ENCODE measurements at regions of chr1 and their contacts with region 1.

Region 1: GRCh38 chr1:155084722-155085503 is 6.3 kb downstream of the EFNA3 start:
- DNase-seq: peak; percentile 93 to 96
- H3K4me3 ChIP-seq: peak overlapping the region; percentile 64
- H3K4me3 Mint-ChIP-seq: peak overlapping the region; percentile 94
- H3K27ac Mint-ChIP-seq: peak overlapping the region; percentile 83
- H3K4me1 ChIP-seq: peaks cover 28% of the 10 kb centered on the region
- H3K4me1 Mint-ChIP-seq: peaks cover 8% of the 10 kb centered on the region
- H3K27me3 ChIP-seq: 0 out of 2 replicates have a peak, but pooled peaks cover 2% of the 10 kb centered on the region
- H3K27me3 Mint-ChIP-seq: peaks cover 11% of the 10 kb centered on the region
- CTCF ChIP-seq: peak; percentile 86 to 91

Region 2: GRCh38 chr1:154669464-154670282 is 415.2 kb before region 1 on chr1:
- CTCF ChIA-PET with region 1: no interaction called
- POLR2A ChIA-PET with region 1: no interaction called
- intact Hi-C with region 1: loop called (anchors 10 kb)
- DNase-seq: peak; percentile 74 to 75
- H3K4me3 ChIP-seq: no peak overlapping the region
- H3K4me3 Mint-ChIP-seq: no peak overlapping the region
- H3K27ac Mint-ChIP-seq: no peak overlapping the region
- H3K4me1 ChIP-seq: no peaks in the 10 kb centered on the region
- H3K4me1 Mint-ChIP-seq: no peaks in the 10 kb centered on the region
- H3K27me3 ChIP-seq: no peaks in the 10 kb centered on the region
- H3K27me3 Mint-ChIP-seq: peaks cover 3% of the 10 kb centered on the region
- CTCF ChIP-seq: peak; percentile 77 to 87

Region 3: GRCh38 chr1:155017041-155017945 is 67.6 kb before region 1 on chr1:
- CTCF ChIA-PET with region 1: interaction called, 10 read pairs
- POLR2A ChIA-PET with region 1: no interaction called
- intact Hi-C with region 1: no loop called
- DNase-seq: peak; percentile 97 to 98
- H3K4me3 ChIP-seq: peak overlapping the region; percentile 6; the same call in 1 of the 2 replicates
- H3K4me3 Mint-ChIP-seq: peak overlapping the region; percentile 56
- H3K27ac Mint-ChIP-seq: peak overlapping the region; percentile 76
- H3K4me1 ChIP-seq: peaks cover 20% of the 10 kb centered on the region
- H3K4me1 Mint-ChIP-seq: peaks cover 38% of the 10 kb centered on the region
- H3K27me3 ChIP-seq: no peaks in the 10 kb centered on the region
- H3K27me3 Mint-ChIP-seq: no peaks in the 10 kb centered on the region
- CTCF ChIP-seq: peak; percentile 99 to 100

Region 4: DNA sequence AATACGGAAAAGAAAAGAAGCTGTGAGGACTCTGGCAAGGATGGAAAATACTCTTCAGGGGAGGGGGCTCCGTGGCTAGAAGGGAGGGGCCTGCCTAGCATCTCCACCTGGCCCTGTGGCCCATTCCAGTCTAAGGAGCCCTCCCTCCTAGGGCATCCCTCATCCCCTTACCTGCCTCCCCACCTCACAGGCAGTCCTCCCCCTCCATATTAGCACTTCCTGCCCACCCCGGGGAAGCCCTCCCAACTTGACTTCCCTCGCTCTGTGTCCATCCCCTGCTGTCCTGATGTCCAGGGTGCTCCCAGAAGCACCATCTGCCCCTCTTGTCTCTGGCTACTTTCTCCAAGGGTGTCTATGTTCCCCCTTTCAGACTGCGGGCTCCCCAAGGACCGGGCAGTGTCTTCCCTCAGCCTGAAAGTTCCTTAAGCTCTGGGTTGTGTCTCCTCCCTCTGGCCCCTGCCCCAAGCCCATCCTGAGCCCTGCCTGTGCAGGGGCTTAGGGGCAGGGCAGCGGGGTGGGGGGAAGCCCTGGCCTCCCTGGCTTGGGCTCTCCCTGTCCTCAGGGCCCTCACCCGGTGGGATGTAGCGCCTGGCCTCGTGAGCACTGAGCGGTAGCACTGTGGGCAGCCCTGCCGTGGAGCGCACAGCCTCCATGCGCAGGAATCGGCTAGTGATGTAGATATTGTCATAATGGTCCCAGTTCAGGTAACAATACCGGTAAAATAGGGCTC is 55.2 kb before region 1 on chr1:
- CTCF ChIA-PET with region 1: no interaction called
- POLR2A ChIA-PET with region 1: no interaction called
- intact Hi-C with region 1: no loop called
- DNase-seq: no peak
- H3K4me3 ChIP-seq: no peak overlapping the region
- H3K4me3 Mint-ChIP-seq: no peak overlapping the region
- H3K27ac Mint-ChIP-seq: no peak overlapping the region
- H3K4me1 ChIP-seq: peaks cover 5% of the 10 kb centered on the region; the same call in 1 of the 2 replicates
- H3K4me1 Mint-ChIP-seq: no peaks in the 10 kb centered on the region
- H3K27me3 ChIP-seq: no peaks in the 10 kb centered on the region
- H3K27me3 Mint-ChIP-seq: peaks cover under 1% of the 10 kb centered on the region
- CTCF ChIP-seq: no peak

Region 5: DNA sequence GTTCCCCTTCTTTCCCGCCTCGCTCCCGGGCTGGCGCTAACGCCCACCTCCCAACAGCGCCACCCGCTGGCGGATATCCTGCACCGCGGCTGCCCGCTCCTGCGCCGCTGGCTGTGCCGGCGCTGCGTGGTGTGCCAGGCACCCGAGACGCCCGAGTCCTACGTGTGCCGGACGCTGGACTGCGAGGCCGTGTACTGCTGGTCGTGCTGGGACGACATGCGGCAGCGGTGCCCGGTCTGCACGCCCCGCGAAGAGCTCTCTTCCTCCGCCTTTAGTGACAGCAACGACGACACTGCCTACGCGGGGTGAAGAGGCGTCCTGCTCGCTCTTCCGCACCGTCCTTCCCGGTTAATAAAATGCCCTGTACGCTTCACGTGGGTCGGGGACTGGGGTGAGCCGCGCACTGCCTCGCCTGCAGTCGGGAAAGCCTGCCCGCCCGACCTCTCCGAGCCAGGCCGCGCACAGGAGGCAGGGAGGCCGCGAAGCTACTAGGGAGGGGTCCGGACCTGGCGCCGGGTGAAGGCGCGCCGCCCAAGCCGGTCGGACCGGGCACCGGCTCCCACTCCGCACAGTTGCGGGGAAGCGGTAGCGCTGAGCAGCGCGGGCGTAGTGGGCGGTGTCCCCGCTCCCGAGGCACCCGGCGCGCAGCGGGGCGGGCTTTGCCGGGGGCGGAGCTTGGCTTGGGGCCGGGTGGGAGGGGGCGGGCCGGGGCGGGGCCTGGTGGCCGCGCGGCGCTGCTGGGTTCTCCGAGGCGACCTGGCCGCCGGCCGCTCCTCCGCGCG is 34.2 kb before region 1 on chr1 and contains the start of gene ADAM15:
- CTCF ChIA-PET with region 1: interaction called, 20 read pairs
- POLR2A ChIA-PET with region 1: interaction called, 9 read pairs
- intact Hi-C with region 1: loop called (anchors 1 kb)
- DNase-seq: peak; percentile 80 to 90
- H3K4me3 ChIP-seq: peak within 1 kb of the TSS; percentile 61
- H3K4me3 Mint-ChIP-seq: peak within 1 kb of the TSS; percentile 88
- H3K27ac Mint-ChIP-seq: peak within 1 kb of the TSS; percentile 86
- H3K4me1 ChIP-seq: peaks cover 20% of the 10 kb centered on the region
- H3K4me1 Mint-ChIP-seq: peaks cover 19% of the 10 kb centered on the region
- H3K27me3 ChIP-seq: no peaks in the 10 kb centered on the region
- H3K27me3 Mint-ChIP-seq: no peaks in the 10 kb centered on the region
- CTCF ChIP-seq: peak; percentile 86 to 90
- total RNA-seq, gene ADAM15: 44.0 and 48.2 TPM in 2 replicates

Region 6: DNA sequence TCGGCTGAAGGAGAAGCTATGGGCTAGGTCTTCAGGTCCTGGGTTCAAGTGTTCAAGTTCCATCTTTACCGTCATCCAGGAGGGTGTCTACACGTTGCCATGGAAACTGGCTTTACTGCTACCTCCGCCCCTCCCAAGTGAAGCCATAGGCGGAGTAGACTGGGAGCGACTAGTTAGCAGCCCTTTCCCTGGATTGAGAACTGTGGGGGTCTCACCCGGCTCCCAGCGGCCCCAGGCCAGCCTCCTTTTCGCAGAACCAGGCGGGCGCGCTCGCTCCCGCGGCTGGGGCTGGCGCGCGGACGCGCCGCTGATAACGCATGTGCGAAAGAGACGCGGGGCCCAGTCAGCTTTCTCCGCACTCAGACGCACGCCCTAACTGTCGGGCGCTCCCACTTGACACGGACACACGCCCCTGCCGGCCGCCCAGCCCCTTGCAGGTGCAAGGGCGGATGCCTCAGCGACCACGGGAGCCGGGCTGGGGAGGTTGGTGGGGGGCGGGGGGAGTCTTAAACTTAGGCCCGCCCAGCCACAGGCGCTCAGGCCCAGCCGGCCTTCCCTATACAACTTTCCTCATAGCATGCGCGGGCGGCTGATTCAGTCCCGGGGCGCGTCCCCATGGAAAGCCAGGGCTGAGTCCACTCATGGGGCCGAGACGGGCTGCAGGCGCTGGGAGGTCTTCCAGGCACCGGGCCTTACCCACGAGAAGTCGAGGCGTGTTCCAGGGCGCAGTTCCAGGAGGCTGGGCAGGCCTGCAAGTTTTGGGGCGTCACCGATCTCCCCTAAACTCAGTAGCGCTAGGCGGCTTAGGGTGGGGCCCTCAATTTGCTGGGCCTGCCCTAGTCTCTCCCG is 14.0 kb before region 1 on chr1:
- CTCF ChIA-PET with region 1: interaction called, 39 read pairs
- POLR2A ChIA-PET with region 1: no interaction called
- intact Hi-C with region 1: loop called (anchors 1 kb)
- DNase-seq: peak; percentile 89 to 91
- H3K4me3 ChIP-seq: peak overlapping the region; percentile 30
- H3K4me3 Mint-ChIP-seq: peak overlapping the region; percentile 20
- H3K27ac Mint-ChIP-seq: no peak overlapping the region
- H3K4me1 ChIP-seq: peaks cover 20% of the 10 kb centered on the region
- H3K4me1 Mint-ChIP-seq: peaks cover 5% of the 10 kb centered on the region
- H3K27me3 ChIP-seq: no peaks in the 10 kb centered on the region
- H3K27me3 Mint-ChIP-seq: no peaks in the 10 kb centered on the region
- CTCF ChIP-seq: peak; percentile 63 to 75

Region 7: DNA sequence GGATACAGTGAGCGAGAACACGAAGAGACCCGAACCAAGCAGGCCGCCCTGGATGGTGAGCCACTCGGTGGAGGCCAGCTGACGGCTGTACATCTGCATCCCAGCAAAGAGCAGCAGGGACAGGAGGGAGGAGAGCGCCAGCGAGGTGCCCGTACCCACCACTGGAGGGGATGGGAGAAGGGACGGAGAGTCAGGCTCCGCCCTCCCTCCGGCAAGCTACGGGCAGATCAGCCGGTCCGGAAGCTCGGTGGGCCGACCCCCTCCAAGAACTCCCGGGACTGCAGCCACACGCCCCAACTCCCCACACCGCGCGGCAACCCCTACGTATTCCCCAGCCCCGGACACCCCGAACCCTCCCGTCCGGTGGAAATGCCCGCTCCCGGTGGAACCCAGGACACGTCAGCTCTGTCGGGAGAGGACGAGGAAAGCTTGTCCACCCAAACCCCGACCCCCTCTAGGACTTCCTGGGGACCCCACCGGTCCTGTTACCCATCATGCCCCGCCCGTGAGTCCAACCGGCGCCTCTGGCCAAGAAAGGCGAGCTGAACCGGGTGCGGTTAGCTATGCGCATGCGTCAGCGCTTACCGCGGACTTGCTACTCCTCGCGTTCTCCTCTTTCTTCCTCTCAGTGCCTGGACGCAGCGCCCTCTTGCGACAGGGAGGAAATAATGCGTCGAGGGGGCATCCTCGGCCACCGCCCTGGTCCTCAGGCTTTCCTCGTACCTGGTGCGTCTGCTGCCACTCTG is 88.0 kb after region 1 on chr1 and contains the start of gene KRTCAP2:
- CTCF ChIA-PET with region 1: interaction called, 147 read pairs
- POLR2A ChIA-PET with region 1: interaction called, 7 read pairs
- intact Hi-C with region 1: no loop called
- DNase-seq: peak; percentile 94 to 96
- H3K4me3 ChIP-seq: peak within 1 kb of the TSS; percentile 67
- H3K4me3 Mint-ChIP-seq: peak within 1 kb of the TSS; percentile 98
- H3K27ac Mint-ChIP-seq: peak within 1 kb of the TSS; percentile 91
- H3K4me1 ChIP-seq: peaks cover 16% of the 10 kb centered on the region; the same call in 1 of the 2 replicates
- H3K4me1 Mint-ChIP-seq: peaks cover 11% of the 10 kb centered on the region
- H3K27me3 ChIP-seq: no peaks in the 10 kb centered on the region
- H3K27me3 Mint-ChIP-seq: no peaks in the 10 kb centered on the region
- CTCF ChIP-seq: peak; percentile 81 to 93
- total RNA-seq, gene KRTCAP2: 215 and 219 TPM in 2 replicates

Measured in Caco-2 (cell line).